ENCODE measurements at regions of chr5 and their contacts with region 1.

Region 1: DNA sequence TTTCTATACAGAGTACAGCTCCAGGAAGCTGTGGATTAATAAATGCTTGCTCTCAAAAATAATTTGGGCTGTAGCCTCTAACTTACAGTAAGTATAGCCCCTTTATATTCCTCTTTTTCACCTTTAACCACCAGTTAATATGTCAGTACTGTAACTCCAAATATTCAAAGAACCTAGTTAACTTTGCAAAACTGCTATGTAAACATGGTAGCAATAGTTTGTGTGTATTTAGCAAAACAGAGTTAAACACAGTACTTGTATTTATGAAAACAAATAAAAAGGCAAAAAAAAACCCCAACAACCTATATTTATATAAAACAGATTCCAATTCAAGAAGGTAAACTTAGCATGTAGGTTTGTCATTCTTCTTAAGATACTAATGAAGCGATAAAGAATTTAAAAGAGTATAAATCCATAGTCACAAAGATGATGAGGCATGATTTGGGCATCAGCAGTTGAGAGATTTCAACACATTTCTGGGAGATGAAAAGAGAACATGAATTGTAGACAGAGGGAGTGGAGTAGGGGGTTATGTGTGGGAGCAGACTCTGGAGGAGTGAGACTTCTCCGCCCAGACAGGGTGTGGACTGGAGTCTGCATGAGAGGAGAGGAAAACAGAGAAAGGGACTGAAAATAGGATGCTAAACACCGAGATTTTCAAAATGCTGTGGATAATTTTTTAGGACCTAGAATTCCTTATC is 47.0 kb upstream of the F2RL1 start:
- DNase-seq: peak in 1 of 2 experiments; percentile 91
- ATAC-seq: peak; percentile 92 to 98
- H3K4me3 ChIP-seq: no peak overlapping the region
- H3K27ac ChIP-seq: peak overlapping the region; percentile 81
- H3K4me1 ChIP-seq: peaks cover 19% of the 10 kb centered on the region
- CTCF ChIP-seq: no peak
- EP300 ChIP-seq: peak; percentile 65 to 69; a peak in 4 of 5 replicates
- POLR2A ChIP-seq: no peak
- RAD21 ChIP-seq: peak in 1 of 2 experiments; percentile 24; a peak in 1 of 5 replicates

Region 2: DNA sequence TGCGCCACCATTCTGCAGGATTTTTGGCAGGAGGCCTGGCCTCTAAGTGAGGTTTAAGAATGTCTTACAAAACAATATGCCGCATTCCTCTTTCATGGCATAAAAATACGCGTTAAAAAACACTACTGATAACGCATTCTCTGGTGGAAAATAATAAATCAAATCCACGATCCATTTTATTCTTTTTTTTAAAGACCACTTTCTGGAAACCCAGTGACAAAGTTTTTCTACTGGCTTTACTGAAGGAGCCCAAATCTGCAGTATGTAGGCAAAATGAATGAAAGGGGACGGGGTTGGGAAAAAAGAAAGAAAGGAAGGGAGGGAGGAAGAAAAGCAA is 686.6 kb before region 1 on chr5:
- CTCF ChIA-PET with region 1: no interaction called
- POLR2A ChIA-PET with region 1: no interaction called
- DNase-seq: no peak
- ATAC-seq: no peak
- H3K4me3 ChIP-seq: no peak overlapping the region
- H3K27ac ChIP-seq: no peak overlapping the region
- H3K4me1 ChIP-seq: peaks cover 7% of the 10 kb centered on the region; the same call in 1 of the 3 replicates
- CTCF ChIP-seq: no peak
- EP300 ChIP-seq: no peak
- POLR2A ChIP-seq: no peak
- RAD21 ChIP-seq: no peak

Region 3: DNA sequence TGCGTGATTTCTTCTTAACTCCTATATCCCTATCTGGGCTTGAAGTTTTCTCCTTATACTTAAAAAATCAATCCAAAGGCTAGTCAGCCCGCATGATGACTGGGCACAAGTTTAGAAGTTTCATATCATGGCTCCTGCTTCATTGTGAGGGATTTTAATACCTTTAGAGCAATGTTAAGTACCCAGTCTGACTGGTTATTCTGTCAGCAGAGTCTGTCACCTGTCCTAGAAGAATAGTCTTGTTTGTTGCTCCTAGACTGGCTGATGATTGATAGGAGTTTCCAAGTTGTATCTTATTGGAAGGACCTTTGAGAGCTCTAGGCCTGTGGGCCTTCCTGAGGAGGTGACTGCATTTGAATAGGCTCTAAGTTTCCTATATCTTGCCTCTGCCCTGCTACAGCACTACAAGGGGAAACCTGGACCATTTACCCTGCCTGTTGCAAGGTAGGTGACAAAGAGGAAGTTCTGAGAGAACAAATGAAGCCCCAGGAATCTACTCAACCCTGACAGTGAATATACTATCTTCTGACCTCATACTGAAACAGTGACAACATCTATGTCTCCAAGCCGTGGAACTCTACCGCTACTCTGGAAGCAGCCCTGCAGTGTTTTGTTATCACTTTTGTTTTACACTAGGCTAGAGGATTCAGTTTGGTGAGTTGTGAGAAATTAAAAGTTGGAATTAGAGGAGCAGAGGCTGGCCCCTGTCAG is 215.2 kb before region 1 on chr5:
- CTCF ChIA-PET with region 1: no interaction called
- POLR2A ChIA-PET with region 1: no interaction called
- DNase-seq: no peak
- ATAC-seq: no peak
- H3K4me3 ChIP-seq: no peak overlapping the region
- H3K27ac ChIP-seq: no peak overlapping the region
- H3K4me1 ChIP-seq: no peaks in the 10 kb centered on the region
- CTCF ChIP-seq: no peak
- EP300 ChIP-seq: no peak
- POLR2A ChIP-seq: no peak
- RAD21 ChIP-seq: no peak

Region 4: GRCh38 chr5:76641514-76642120 is 130.2 kb before region 1 on chr5:
- CTCF ChIA-PET with region 1: interaction called, 12 read pairs
- POLR2A ChIA-PET with region 1: no interaction called
- DNase-seq: peak; percentile 58 to 80
- ATAC-seq: peak; percentile 62 to 85; a peak in 5 of 6 replicates
- H3K4me3 ChIP-seq: no peak overlapping the region
- H3K27ac ChIP-seq: no peak overlapping the region
- H3K4me1 ChIP-seq: no peaks in the 10 kb centered on the region
- CTCF ChIP-seq: peak; percentile 86
- EP300 ChIP-seq: no peak
- POLR2A ChIP-seq: no peak
- RAD21 ChIP-seq: peak; percentile 87 to 93

Region 5: GRCh38 chr5:76724871-76725270 is 47.0 kb before region 1 on chr5:
- CTCF ChIA-PET with region 1: interaction called, 81 read pairs
- POLR2A ChIA-PET with region 1: no interaction called
- DNase-seq: peak; percentile 35 to 44
- ATAC-seq: peak; percentile 62 to 79
- H3K4me3 ChIP-seq: no peak overlapping the region
- H3K27ac ChIP-seq: peak overlapping the region; percentile 33 to 38; a peak in 4 of 6 replicates
- H3K4me1 ChIP-seq: peaks cover 15% of the 10 kb centered on the region
- CTCF ChIP-seq: no peak
- EP300 ChIP-seq: no peak
- POLR2A ChIP-seq: no peak
- RAD21 ChIP-seq: no peak

Region 6: DNA sequence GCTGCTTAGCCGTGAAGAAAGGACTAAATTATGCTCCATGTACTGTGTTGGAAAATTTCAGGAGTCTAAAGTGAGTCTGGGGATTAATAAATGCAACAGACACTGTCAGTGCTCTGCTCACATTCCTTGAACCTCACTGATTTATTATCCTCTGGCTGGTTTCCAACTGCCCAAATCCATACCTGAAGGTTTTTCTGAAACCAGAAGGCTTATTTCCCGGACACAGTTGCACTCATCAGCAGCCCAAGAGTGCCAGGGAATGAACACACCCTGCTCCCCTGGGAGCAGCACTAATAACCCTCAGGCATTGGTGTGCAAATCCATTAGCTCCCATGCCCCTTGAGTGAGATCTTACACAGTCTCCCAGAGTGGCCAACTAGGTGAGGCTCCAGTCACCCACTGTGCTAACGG is 17.2 kb before region 1 on chr5:
- CTCF ChIA-PET with region 1: interaction called, 34 read pairs
- POLR2A ChIA-PET with region 1: no interaction called
- DNase-seq: no peak
- ATAC-seq: peak in 1 of 2 experiments; percentile 58; a peak in 3 of 6 replicates
- H3K4me3 ChIP-seq: no peak overlapping the region
- H3K27ac ChIP-seq: 0 out of 6 replicates have a peak overlapping the region, but pooled peaks of 1 of the 2 experiments have one; percentile 15
- H3K4me1 ChIP-seq: peaks cover 19% of the 10 kb centered on the region
- CTCF ChIP-seq: no peak
- EP300 ChIP-seq: no peak
- POLR2A ChIP-seq: no peak
- RAD21 ChIP-seq: no peak

Region 7: GRCh38 chr5:76805850-76806505 is 34.1 kb after region 1 on chr5:
- CTCF ChIA-PET with region 1: interaction called, 33 read pairs
- POLR2A ChIA-PET with region 1: interaction called, 7 read pairs
- DNase-seq: peak; percentile 90 to 98
- ATAC-seq: peak; percentile 83 to 89
- H3K4me3 ChIP-seq: peak overlapping the region; percentile 22; the same call in 1 of the 3 replicates
- H3K27ac ChIP-seq: peak overlapping the region; percentile 90 to 98
- H3K4me1 ChIP-seq: peaks cover 79% of the 10 kb centered on the region
- CTCF ChIP-seq: no peak
- EP300 ChIP-seq: peak; percentile 99
- POLR2A ChIP-seq: no peak
- RAD21 ChIP-seq: peak; percentile 13 to 72; a peak in 4 of 5 replicates